Activated T-helper 2 cell treated with anti-CD3 and anti-CD28 coated beads, Interferon-gamma antibody, Interleukin-2, Interleukin-4, amounts not matched to agents 10 μg/mL and 5 μg/mL and 100 μg/mL, durations not matched to agents 14 hours and 24 hours and 36 hours (primary cell): ENCODE measurements at regions of chr7 and their contacts with region 1.

Region 1: GRCh38 chr7:74453322-74454011 is at the start of gene GTF2IRD1:
- DNase-seq: no peak
- H3K4me3 Mint-ChIP-seq: peak within 1 kb of the TSS; percentile 70
- H3K27ac Mint-ChIP-seq: peak within 1 kb of the TSS; percentile 81
- H3K4me1 Mint-ChIP-seq: peaks cover 10% of the 10 kb centered on the region
- H3K27me3 Mint-ChIP-seq: peaks cover 12% of the 10 kb centered on the region
- total RNA-seq, gene GTF2IRD1: 2.9 and 3.1 TPM in 2 replicates

Region 2: GRCh38 chr7:74254129-74254857 is 199.2 kb before region 1 on chr7 and contains the start of gene RFC2:
- intact Hi-C with region 1: loop called (anchors 1 kb)
- DNase-seq: peak; percentile 97
- H3K4me3 Mint-ChIP-seq: peak within 1 kb of the TSS; percentile 96
- H3K27ac Mint-ChIP-seq: peak within 1 kb of the TSS; percentile 91
- H3K4me1 Mint-ChIP-seq: peaks cover 17% of the 10 kb centered on the region
- H3K27me3 Mint-ChIP-seq: no peaks in the 10 kb centered on the region
- total RNA-seq, gene RFC2: 82.9 and 85.2 TPM in 2 replicates

Region 3: DNA sequence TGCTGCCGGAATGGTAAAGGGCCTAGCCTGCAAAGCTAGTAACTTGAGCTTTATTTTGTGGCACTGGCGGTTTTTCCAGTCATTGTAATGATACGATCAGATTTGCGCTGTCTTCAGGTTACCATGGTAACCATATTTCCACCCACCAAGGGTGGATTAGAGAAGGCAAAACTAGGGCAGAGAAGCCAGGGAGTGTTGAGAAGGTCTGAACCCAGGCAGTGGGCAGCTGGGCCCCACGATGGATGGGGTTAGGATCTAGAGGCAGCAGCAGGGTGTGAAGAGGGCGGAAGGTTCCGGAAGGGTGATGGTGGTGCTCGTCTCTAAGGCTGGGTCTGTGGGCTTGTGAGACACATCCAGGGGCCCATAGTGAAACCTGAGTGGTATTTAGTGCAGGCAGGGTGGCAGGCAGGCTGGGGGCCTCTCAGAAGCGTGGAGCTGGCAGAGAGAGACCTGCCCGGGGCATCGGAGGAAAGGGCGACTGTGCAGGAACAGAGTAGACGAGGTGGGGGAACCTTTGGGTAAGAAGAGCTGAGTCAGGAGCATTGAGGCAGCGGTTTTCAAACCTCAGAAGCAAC is 116.1 kb after region 1 on chr7:
- intact Hi-C with region 1: loop called (anchors 1 kb)
- DNase-seq: peak; percentile 14
- H3K4me3 Mint-ChIP-seq: no peak overlapping the region
- H3K27ac Mint-ChIP-seq: peak overlapping the region; percentile 83
- H3K4me1 Mint-ChIP-seq: peaks cover 14% of the 10 kb centered on the region
- H3K27me3 Mint-ChIP-seq: no peaks in the 10 kb centered on the region

Region 4: DNA sequence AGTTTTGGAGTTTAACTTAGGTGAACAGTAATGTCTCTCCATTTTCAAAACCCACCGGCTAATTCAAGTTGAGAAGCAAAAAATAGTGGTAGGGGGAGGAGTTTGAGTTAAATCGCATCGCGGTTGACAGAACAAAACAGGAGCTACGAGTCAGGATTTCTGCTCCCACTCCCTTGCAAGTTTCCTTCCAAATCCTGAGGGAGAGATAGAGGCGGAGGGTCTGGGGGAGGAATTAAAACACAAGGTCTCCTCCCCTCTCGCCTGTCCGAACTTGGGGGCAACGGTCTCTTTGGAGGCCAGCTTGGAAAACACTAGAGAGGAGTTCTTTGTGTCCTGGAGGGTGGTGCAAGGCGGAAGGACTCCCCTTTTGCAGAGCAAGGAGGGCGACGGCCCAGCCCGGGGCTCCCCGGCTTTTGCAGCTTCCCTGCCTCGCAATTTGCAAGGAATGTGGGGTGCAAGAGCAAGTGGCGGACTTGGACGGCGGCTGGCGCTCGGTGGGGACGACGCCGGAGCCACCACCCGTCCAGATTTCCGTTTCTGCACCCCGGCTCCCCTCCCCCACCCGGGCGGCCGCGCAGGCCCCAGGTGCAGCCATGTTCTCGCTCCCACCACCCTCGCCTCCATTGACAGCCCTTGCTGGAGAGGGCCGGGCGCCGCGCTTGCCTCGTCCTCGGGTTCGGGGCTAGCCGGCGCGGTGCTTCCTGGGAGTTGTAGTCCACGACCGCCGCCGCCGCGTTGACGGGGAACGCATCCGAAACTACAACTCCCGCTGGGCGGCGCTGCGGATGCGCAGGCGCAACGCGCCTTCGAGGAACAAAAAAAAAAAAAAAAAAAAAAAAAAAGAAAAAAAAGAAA is 203.6 kb after region 1 on chr7:
- intact Hi-C with region 1: loop called (anchors 2 kb)
- DNase-seq: peak; percentile 97
- H3K4me3 Mint-ChIP-seq: peak overlapping the region; percentile 91
- H3K27ac Mint-ChIP-seq: peak overlapping the region; percentile 94
- H3K4me1 Mint-ChIP-seq: peaks cover 44% of the 10 kb centered on the region
- H3K27me3 Mint-ChIP-seq: no peaks in the 10 kb centered on the region